ENCODE measurements at regions of chrX and their contacts with region 1.

Region 1: DNA sequence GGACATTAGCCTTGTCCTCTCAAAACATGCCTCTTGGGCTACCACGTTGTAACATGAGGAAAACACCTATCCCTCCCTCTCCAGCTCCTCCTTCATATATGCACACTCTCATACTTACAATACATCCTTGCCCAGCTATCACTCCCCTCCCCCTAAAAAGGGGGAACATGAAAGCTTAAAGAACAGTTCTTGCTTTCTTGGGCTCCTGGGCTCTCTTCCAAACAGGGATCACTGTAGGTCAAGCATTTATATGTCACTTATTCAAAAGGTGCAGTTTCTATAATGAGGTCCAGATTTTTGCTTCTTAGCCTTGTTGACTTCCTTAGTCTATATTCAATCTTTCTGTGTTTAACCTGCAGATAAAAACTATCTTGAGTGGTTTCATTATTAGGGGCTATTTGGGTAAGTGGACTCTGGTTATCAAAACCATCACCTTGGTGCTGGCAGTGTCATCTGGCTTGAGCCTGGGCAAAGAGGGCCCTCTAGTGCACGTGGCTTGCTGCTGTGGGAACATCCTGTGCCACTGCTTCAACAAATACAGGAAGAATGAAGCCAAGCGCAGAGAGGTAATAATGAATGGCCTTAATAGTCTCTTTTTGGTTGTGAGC is 119.4 kb downstream of the AKAP4 start:
- ATAC-seq: peak in 6 of 8 experiments; percentile 31 to 78 (median 62)
- H3K4me3 ChIP-seq: no peak overlapping the region
- H3K27ac ChIP-seq: no peak overlapping the region
- H3K4me1 ChIP-seq: no peaks in the 10 kb centered on the region

Region 2: DNA sequence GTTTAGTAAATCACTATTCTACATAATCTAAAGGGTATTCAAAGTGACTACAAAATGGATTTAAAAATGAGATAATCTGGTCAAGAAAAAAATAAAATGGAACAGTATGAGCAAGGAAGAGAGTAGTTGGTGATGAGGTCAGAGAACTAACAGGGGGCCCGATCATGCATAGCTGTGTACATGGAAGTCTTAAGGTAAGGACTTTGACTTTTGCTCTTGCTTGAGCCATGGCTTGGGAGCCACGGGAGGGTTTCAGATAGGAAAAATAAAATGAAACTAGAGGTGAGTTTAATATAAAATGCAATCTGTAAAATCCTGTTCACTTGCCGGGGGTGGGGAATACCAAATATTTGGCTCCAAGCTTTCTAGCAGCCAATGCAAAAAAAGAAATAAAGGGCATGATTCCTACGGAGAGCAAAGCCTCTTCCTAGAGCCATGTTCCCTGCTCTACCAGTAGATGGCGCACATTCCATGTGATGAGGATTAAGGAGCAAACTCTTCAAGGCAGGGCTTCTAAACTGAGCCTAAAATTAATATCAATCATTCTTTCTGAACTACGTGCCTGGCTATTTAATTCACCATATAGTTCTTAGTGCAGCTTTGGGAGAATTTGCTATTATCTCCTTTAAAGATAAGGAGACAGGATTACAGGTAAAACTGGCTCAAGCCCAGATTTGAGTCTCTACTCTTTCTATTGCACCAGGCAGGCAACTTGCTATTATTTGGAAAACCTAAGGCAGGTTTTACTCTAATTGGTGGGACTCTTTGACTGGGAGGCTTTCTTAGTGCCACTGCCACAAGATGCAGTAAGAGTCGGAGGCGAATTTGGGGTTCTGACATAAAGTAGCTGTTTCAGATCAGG is 165.8 kb before region 1 on chrX:
- in situ Hi-C with region 1: loop called in 2 of 9 experiments (anchors 10 to 25 kb)
- ATAC-seq: peak in 7 of 8 experiments; percentile 38 to 87 (median 61)
- H3K4me3 ChIP-seq: no peak overlapping the region
- H3K27ac ChIP-seq: no peak overlapping the region
- H3K4me1 ChIP-seq: no peaks in the 10 kb centered on the region

Region 3: DNA sequence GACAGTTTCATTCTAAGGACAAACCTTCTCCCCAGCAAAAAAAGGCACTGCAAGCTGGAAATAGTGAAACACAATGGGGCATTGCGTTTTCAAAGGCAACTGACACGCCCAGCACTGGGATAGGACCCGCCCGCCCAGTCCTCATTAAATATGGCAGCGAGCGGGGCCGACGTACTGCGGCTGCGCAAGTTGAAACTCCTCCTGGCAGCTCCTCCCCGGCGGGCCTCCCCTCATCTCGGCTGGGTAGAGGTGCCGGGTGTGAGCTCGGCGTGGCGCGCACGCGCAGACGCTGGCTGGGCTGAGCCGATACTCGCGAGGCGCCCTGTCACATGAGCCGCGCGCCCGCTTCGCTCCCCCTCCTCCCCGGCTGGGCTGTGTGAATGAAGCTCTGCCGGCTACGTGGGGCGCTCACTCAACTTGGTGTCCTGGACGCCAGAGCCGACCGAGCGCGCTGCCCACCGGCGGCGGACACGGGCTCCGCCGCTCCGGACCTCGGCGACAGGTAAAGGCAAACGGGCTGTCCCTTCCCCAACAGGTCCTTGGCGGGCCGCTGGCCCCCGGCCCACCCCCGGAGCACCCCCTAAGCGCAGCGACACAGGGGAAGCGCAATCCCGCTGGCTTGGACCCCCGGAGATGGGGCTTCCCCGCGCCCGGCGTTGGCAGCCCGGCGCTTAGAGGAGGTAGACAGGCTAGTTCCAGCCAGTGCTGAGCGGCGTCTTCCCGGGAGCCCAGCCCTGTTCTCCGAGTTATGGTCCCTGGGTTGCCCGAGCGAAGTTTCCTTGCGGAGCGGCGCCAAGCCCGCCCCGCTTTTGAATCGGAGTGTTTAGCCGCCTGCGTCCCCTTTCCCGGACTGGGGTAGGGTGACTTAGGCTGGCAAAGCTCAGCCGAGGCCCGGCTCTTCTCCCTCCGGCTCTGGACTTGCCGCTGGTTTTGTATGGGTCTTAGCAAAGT is 158.8 kb before region 1 on chrX and contains the start of gene CLCN5:
- in situ Hi-C with region 1: loop called in 2 of 9 experiments (anchors 10 to 25 kb)
- ATAC-seq: peak; percentile 95 to 99 (median 98)
- H3K4me3 ChIP-seq: peak within 1 kb of the TSS; percentile 45 to 94 (median 69)
- H3K27ac ChIP-seq: peak within 1 kb of the TSS; percentile 18 to 36
- H3K4me1 ChIP-seq: peaks cover 2 to 7% of the 10 kb centered on the region in 2 donors
- total RNA-seq, gene CLCN5: 7.0 to 35.0 (median 13.9) TPM